Activated T-helper 1 cell treated with anti-CD3 and anti-CD28 coated beads, Interleukin-12 subunit alpha, Interleukin-12 subunit beta, Interleukin-2, Interleukin-4 antibody, amounts not matched to agents 30 ng/mL and 10 ng/mL and 1 ng/mL, durations not matched to agents 14 hours and 24 hours and 36 hours (primary cell): ENCODE measurements at regions of chr15 and their contacts with region 1.

Region 1: GRCh38 chr15:64905119-64905831 is 6.4 kb upstream of the ANKDD1A start:
- DNase-seq: peak; percentile 71
- H3K4me3 Mint-ChIP-seq: peak overlapping the region; percentile 79
- H3K27ac Mint-ChIP-seq: peak overlapping the region; percentile 50
- H3K4me1 Mint-ChIP-seq: peaks cover 44% of the 10 kb centered on the region
- H3K27me3 Mint-ChIP-seq: peaks cover 11% of the 10 kb centered on the region

Region 2: GRCh38 chr15:63870403-63871209 is 1034.7 kb before region 1 on chr15:
- intact Hi-C with region 1: no loop called
- DNase-seq: no peak
- H3K4me3 Mint-ChIP-seq: no peak overlapping the region
- H3K27ac Mint-ChIP-seq: no peak overlapping the region
- H3K4me1 Mint-ChIP-seq: peaks cover 31% of the 10 kb centered on the region
- H3K27me3 Mint-ChIP-seq: no peaks in the 10 kb centered on the region

Region 3: GRCh38 chr15:64841258-64842095 is 63.8 kb before region 1 on chr15 and contains the start of gene PLEKHO2:
- intact Hi-C with region 1: loop called (anchors 1 kb)
- DNase-seq: peak; percentile 90
- H3K4me3 Mint-ChIP-seq: peak within 1 kb of the TSS; percentile 92
- H3K27ac Mint-ChIP-seq: peak within 1 kb of the TSS; percentile 91
- H3K4me1 Mint-ChIP-seq: peaks cover 74% of the 10 kb centered on the region
- H3K27me3 Mint-ChIP-seq: no peaks in the 10 kb centered on the region
- total RNA-seq, gene PLEKHO2: 17.0 and 17.8 TPM in 2 replicates

Region 4: DNA sequence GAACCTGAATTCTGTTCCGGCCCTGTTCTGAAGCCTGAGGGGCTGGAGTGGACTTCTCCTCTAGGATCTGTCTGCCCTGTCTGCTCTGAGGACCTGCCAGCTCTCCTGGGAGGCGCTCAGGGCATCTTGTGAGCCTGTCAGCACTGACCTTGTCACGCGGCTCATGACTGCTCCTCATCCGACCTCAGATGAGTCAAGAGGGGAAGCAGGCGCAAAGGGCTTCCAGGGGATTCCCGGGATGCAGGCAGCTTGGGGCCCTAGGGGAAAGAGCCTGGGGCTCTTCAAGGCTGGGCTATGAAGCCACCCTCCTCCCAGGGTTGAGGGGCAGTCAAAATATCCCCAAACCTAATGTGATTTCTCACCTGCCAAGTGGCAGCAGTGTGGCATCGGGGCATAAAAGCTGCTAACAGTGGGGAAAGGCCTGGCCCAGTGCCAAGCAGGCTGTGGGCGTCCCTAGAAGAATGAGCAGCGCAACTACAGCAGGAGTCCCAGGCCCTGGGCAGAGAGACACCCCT is 21.2 kb before region 1 on chr15:
- intact Hi-C with region 1: loop called (anchors 1 kb)
- DNase-seq: peak; percentile 52
- H3K4me3 Mint-ChIP-seq: peak overlapping the region; percentile 69
- H3K27ac Mint-ChIP-seq: peak overlapping the region; percentile 91
- H3K4me1 Mint-ChIP-seq: peaks cover 28% of the 10 kb centered on the region
- H3K27me3 Mint-ChIP-seq: no peaks in the 10 kb centered on the region

Region 5: GRCh38 chr15:64950888-64951287 is 45.6 kb after region 1 on chr15:
- intact Hi-C with region 1: no loop called
- DNase-seq: no peak
- H3K4me3 Mint-ChIP-seq: no peak overlapping the region
- H3K27ac Mint-ChIP-seq: no peak overlapping the region
- H3K4me1 Mint-ChIP-seq: no peaks in the 10 kb centered on the region
- H3K27me3 Mint-ChIP-seq: peaks cover 2% of the 10 kb centered on the region

Region 6: GRCh38 chr15:65494071-65494470 is 588.8 kb after region 1 on chr15:
- intact Hi-C with region 1: no loop called
- DNase-seq: no peak
- H3K4me3 Mint-ChIP-seq: no peak overlapping the region
- H3K27ac Mint-ChIP-seq: no peak overlapping the region
- H3K4me1 Mint-ChIP-seq: no peaks in the 10 kb centered on the region
- H3K27me3 Mint-ChIP-seq: no peaks in the 10 kb centered on the region